ENCODE measurements at regions of chr17 and their contacts with region 1.

Region 1: DNA sequence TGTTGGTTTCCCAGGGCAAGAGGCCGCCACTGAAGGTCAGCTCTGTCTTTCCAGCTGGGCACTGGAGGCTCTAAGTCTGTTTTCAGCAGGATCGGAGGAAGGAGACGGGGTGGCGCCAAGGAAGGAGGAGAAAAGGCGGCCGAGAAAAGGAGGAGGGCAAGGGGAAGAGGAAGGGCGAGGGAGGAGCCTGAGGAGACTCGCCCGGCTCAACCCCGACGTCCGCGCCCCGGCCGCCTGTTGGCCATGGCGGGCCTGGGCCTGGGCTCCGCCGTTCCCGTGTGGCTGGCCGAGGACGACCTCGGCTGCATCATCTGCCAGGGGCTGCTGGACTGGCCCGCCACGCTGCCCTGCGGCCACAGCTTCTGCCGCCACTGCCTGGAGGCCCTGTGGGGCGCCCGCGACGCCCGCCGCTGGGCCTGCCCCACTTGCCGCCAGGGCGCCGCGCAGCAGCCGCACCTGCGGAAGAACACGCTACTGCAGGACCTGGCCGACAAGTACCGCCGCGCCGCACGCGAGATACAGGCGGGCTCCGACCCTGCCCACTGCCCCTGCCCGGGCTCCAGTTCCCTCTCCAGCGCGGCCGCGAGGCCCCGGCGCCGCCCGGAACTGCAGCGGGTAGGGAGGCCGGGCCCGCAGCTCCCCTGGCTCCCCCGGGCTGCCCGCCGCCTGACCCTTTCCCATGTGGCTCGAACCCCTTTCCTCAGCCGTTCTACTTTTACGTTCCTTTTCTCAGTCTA is at the start of gene RNF135:
- DNase-seq: peak; percentile 95
- H3K4me3 ChIP-seq: peak within 1 kb of the TSS; percentile 74 to 97 (median 78)
- H3K27ac ChIP-seq: peak within 1 kb of the TSS; percentile 93 to 98 (median 94)
- H3K4me1 ChIP-seq: peaks cover 0 to 33% (median 31%) of the 10 kb centered on the region in 4 donors
- H3K27me3 ChIP-seq: no peaks in the 10 kb centered on the region
- CTCF ChIP-seq: peak; percentile 33 to 53 (median 34)
- EP300 ChIP-seq: no peak
- POLR2A ChIP-seq: no peak
- total RNA-seq, gene RNF135: 20.0 to 28.1 (median 22.9) TPM

Region 2: DNA sequence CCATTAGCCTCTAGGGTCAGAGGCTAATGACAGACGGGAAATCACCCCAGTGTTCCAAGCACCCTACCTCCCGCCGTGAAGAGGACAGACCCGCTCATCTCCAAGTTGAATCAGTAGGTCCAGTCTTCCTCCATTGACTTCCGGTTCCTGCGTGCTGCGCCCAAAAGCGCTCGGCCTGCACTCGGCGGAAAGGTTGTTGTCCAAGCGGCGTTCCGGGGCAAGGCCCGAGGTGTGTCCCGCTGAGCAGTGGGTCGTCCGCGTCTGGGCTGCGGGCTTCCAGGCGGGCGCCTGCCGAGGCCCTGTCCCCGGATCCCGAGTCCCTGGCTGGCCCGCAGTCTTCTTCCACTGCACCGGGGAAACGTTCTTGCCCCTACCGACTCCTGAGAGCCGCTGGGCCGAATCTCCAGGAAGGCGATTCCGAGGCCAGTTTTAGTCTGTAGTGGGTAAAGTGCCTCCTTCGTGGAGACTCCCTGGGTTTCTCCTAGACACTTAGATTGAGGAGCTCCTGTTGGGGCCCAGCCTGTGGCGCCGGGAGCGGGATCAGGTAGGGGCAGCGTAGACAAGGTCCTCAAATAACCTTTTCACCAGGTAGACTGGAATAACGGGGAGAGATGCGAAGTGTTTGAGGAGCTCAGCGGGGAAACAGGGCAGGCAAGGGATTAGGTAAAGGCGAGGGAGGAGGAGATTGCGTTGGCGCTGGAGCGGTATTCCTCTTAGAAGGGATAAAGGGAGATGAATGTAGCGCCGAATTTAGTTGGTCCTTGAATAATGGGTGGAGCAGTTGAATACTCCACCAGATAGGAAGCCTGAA is 64.7 kb before region 1 on chr17 and contains the start of gene TEFM:
- intact Hi-C with region 1: loop called (anchors 2 kb)
- DNase-seq: peak; percentile 96
- H3K4me3 ChIP-seq: peak within 1 kb of the TSS; percentile 58 to 89 (median 80)
- H3K27ac ChIP-seq: peak within 1 kb of the TSS; percentile 83 to 91 (median 89)
- H3K4me1 ChIP-seq: peaks cover 14 to 31% (median 24%) of the 10 kb centered on the region in 4 donors
- H3K27me3 ChIP-seq: no peaks in the 10 kb centered on the region
- CTCF ChIP-seq: no peak
- EP300 ChIP-seq: no peak
- POLR2A ChIP-seq: no peak
- total RNA-seq, gene TEFM: 5.0 to 7.0 (median 6.6) TPM

Region 3: DNA sequence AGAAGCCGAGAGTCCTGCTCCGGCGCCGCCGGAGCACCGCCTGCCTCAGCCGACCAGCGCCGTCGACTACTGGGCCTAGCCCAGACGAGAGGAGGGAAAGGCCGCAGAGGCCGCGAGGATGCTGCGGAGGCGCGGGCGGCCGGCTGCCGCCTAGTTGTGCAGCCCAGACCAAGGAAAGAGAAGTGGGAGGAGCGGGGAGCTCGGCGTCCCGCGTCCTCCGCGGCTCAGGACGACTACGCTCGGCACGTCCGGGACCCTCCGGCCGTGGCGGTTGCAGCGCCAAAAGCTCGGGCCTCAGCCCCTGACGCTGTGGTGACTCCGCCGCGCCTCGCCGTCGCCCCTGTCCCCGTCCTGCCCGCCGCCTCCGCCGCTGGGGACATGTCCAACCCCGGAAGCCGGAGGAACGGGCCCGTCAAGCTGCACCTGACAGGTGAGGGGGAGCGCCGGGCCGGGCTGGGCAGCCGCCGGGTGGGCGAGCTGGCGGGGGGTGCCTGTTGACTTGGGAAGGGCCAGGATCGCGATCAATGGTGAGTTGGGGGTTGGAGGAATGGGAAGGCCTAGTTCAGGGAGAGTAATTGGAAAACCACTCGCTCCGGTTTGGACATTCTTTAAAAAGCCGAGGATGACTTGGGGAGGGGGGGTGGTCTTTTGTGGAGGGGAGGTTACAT is 37.5 kb after region 1 on chr17:
- intact Hi-C with region 1: loop called (anchors 5 kb)
- DNase-seq: no peak
- H3K4me3 ChIP-seq: peak overlapping the region; percentile 73 to 91 (median 80)
- H3K27ac ChIP-seq: peak overlapping the region; percentile 87 to 92 (median 90)
- H3K4me1 ChIP-seq: peaks cover 2 to 25% (median 17%) of the 10 kb centered on the region in 4 donors
- H3K27me3 ChIP-seq: no peaks in the 10 kb centered on the region
- CTCF ChIP-seq: no peak
- EP300 ChIP-seq: no peak
- POLR2A ChIP-seq: no peak